Naive thymus-derived CD4-positive, alpha-beta T cell (primary cell): ENCODE measurements at regions of chr15 and their contacts with region 1.

Region 1: GRCh38 chr15:100588638-100589242 is 13.2 kb downstream of the LINS1 start:
- DNase-seq: no peak
- ATAC-seq: no peak
- H3K4me3 ChIP-seq: no peak overlapping the region
- H3K4me3 Mint-ChIP-seq: no peak overlapping the region
- H3K27ac ChIP-seq: no peak overlapping the region
- H3K27ac Mint-ChIP-seq: peak overlapping the region in 1 of 9 donors; percentile 26
- H3K4me1 ChIP-seq: peaks cover 4 to 28% of the 10 kb centered on the region in 2 donors
- H3K4me1 Mint-ChIP-seq: peaks cover 25 to 81% (median 49%) of the 10 kb centered on the region in 7 donors
- H3K27me3 ChIP-seq: no peaks in the 10 kb centered on the region
- H3K27me3 Mint-ChIP-seq: no peaks in the 10 kb centered on the region

Region 2: GRCh38 chr15:99818872-99819271 is 769.9 kb before region 1 on chr15:
- CTCF ChIA-PET with region 1: no interaction called
- POLR2A ChIA-PET with region 1: no interaction called
- intact Hi-C with region 1: loop called in 1 of 2 experiments (anchors 10 kb)
- DNase-seq: no peak
- ATAC-seq: no peak
- H3K4me3 ChIP-seq: no peak overlapping the region
- H3K4me3 Mint-ChIP-seq: no peak overlapping the region
- H3K27ac ChIP-seq: no peak overlapping the region
- H3K27ac Mint-ChIP-seq: no peak overlapping the region
- H3K4me1 ChIP-seq: no peaks in the 10 kb centered on the region
- H3K4me1 Mint-ChIP-seq: peaks cover 0 to 3% (median 0%) of the 10 kb centered on the region in 7 donors
- H3K27me3 ChIP-seq: no peaks in the 10 kb centered on the region
- H3K27me3 Mint-ChIP-seq: no peaks in the 10 kb centered on the region

Region 3: DNA sequence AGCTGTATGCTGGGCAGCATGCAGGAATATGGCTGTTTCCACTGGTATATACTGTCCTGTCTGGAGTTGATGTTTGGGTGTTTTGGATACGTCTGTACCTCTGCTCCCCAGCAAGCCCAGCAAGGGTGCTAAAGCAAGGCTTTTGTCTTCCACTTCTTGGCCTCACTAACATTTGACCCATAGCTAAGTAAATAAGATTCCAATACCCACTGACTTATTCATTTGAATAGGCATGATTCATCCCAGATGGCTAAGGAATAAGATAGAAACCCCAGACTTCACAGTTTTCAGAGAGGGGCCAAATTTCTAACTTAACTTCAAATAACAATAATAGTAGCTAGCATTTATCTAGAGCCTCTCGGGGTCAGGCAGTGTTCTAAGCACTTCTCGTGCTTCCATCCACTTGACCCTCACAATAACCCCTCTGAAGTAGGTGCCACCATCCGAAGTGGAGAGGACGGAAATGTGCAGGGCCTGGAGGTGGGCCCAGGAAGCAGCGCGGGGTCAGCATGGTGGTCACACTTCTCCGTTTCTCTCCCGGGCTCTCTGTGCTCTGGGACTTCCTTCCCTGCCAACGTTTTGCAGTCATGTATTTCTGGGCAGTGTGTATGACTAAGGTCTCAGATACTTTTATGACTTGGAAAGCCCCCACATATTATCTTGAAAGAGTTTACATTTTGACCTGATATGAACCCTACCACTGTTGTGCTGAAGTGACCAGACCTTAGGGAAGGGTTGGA is 369.8 kb after region 1 on chr15:
- CTCF ChIA-PET with region 1: no interaction called
- POLR2A ChIA-PET with region 1: no interaction called
- intact Hi-C with region 1: no loop called
- DNase-seq: no peak
- ATAC-seq: peak; percentile 59
- H3K4me3 ChIP-seq: no peak overlapping the region
- H3K4me3 Mint-ChIP-seq: no peak overlapping the region
- H3K27ac ChIP-seq: no peak overlapping the region
- H3K27ac Mint-ChIP-seq: no peak overlapping the region
- H3K4me1 ChIP-seq: no peaks in the 10 kb centered on the region
- H3K4me1 Mint-ChIP-seq: no peaks in the 10 kb centered on the region
- H3K27me3 ChIP-seq: no peaks in the 10 kb centered on the region
- H3K27me3 Mint-ChIP-seq: peaks cover 28 to 42% (median 37%) of the 10 kb centered on the region in 5 donors